ENCODE measurements at regions of chr5 and their contacts with region 1.

Region 1: DNA sequence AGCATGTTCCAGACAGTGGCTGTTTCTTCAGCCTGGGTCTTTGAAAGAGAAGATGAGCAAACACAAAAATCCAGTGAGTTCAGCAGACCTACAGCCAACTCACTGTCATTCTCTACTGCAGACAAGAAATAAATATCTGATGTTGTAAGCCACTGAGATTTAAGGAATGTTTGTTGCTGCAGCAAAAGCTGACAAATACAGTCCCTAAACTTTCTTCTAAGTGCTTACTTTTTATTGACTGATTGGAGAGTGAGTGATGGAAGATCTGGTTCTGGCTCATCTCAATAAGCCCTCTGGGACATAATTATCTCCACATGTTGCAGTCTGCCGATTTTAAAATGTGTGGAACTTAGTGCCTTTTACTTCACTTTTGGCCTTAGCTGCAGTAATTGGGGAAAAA is 69.9 kb upstream of the LMNB1 start:
- DNase-seq: no peak
- ATAC-seq: no peak
- H3K4me3 ChIP-seq: no peak overlapping the region
- H3K27ac ChIP-seq: no peak overlapping the region
- H3K4me1 ChIP-seq: no peaks in the 10 kb centered on the region
- H3K27me3 ChIP-seq: peaks cover 0 to 8% (median 0%) of the 10 kb centered on the region in 7 donors
- CTCF ChIP-seq: no peak

Region 2: GRCh38 chr5:126763371-126763770 is 56.3 kb after region 1 on chr5:
- intact Hi-C with region 1: loop called in 1 of 10 experiments (anchors 1 kb)
- DNase-seq: no peak
- ATAC-seq: no peak
- H3K4me3 ChIP-seq: no peak overlapping the region
- H3K27ac ChIP-seq: peak overlapping the region in 1 of 10 donors; percentile 85
- H3K4me1 ChIP-seq: peaks cover 0 to 30% (median 0%) of the 10 kb centered on the region in 9 donors
- H3K27me3 ChIP-seq: peaks cover 0 to 5% (median 0%) of the 10 kb centered on the region in 7 donors
- CTCF ChIP-seq: no peak